ENCODE measurements at regions of chr1 and their contacts with region 1.

Region 1: GRCh38 chr1:20493839-20494608 is 8.0 kb upstream of the CAMK2N1 start:
- DNase-seq: peak; percentile 86
- ATAC-seq: peak; percentile 69
- H3K4me3 Mint-ChIP-seq: no peak overlapping the region
- H3K27ac Mint-ChIP-seq: no peak overlapping the region
- H3K4me1 Mint-ChIP-seq: no peaks in the 10 kb centered on the region
- H3K27me3 Mint-ChIP-seq: peaks cover 12% of the 10 kb centered on the region

Region 2: DNA sequence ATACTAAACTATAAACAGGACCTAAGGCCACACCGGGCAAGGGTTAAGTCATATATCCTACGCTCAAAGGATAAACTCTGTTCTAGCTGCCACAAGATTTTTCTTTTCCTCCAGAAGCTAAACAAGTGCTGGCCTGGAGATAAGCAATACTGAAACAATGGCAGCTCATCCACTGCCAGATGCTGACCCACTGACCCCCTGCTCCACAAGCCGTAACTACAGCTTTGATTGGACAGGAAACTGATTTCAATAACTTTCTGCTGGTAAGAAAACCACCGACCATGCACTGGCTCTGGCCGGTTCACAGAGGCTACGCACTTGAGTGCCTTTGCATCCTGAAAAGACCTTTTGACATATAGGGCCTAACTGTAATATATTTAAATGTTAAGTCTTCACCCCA is 256.4 kb before region 1 on chr1:
- CTCF ChIA-PET with region 1: interaction called, 10 read pairs
- POLR2A ChIA-PET with region 1: no interaction called
- DNase-seq: no peak
- ATAC-seq: no peak
- H3K4me3 Mint-ChIP-seq: no peak overlapping the region
- H3K27ac Mint-ChIP-seq: no peak overlapping the region
- H3K4me1 Mint-ChIP-seq: no peaks in the 10 kb centered on the region
- H3K27me3 Mint-ChIP-seq: peaks cover 59% of the 10 kb centered on the region

Region 3: GRCh38 chr1:20376880-20377494 is 117.0 kb before region 1 on chr1:
- CTCF ChIA-PET with region 1: interaction called, 10 read pairs
- POLR2A ChIA-PET with region 1: no interaction called
- DNase-seq: peak; percentile 65
- ATAC-seq: peak; percentile 72
- H3K4me3 Mint-ChIP-seq: no peak overlapping the region
- H3K27ac Mint-ChIP-seq: no peak overlapping the region
- H3K4me1 Mint-ChIP-seq: no peaks in the 10 kb centered on the region
- H3K27me3 Mint-ChIP-seq: peaks cover 11% of the 10 kb centered on the region

Region 4: GRCh38 chr1:20507564-20508410 is 13.8 kb after region 1 on chr1 and contains the start of gene MUL1:
- CTCF ChIA-PET with region 1: interaction called, 19 read pairs
- POLR2A ChIA-PET with region 1: interaction called, 8 read pairs
- DNase-seq: peak; percentile 96
- ATAC-seq: peak; percentile 90
- H3K4me3 Mint-ChIP-seq: peak within 1 kb of the TSS; percentile 93
- H3K27ac Mint-ChIP-seq: peak within 1 kb of the TSS; percentile 95
- H3K4me1 Mint-ChIP-seq: peaks cover 24% of the 10 kb centered on the region
- H3K27me3 Mint-ChIP-seq: peaks cover 3% of the 10 kb centered on the region
- total RNA-seq, gene MUL1: 17.2 to 18.6 TPM

Region 5: GRCh38 chr1:20584890-20585289 is 90.9 kb after region 1 on chr1:
- CTCF ChIA-PET with region 1: no interaction called
- POLR2A ChIA-PET with region 1: no interaction called
- DNase-seq: no peak
- ATAC-seq: no peak
- H3K4me3 Mint-ChIP-seq: no peak overlapping the region
- H3K27ac Mint-ChIP-seq: no peak overlapping the region
- H3K4me1 Mint-ChIP-seq: peaks cover 13% of the 10 kb centered on the region
- H3K27me3 Mint-ChIP-seq: peaks cover 28% of the 10 kb centered on the region

Measured in activated CD8-positive, alpha-beta T cell treated with anti-CD3 and anti-CD28 coated beads, Interleukin-2, amount 10 ng/mL, durations not matched to agents 7 days and 5 days (primary cell).